ENCODE measurements at regions of chr6 and their contacts with region 1.

Region 1: GRCh38 chr6:105431226-105431625 is 28.3 kb upstream of the PREP start:
- DNase-seq: peak in 3 of 9 experiments; percentile 21 to 74 (median 68)
- ATAC-seq: no peak
- H3K4me3 ChIP-seq: no peak overlapping the region
- H3K4me3 Mint-ChIP-seq: no peak overlapping the region
- H3K27ac ChIP-seq: no peak overlapping the region
- H3K27ac Mint-ChIP-seq: no peak overlapping the region
- H3K4me1 ChIP-seq: no peaks in the 10 kb centered on the region
- H3K4me1 Mint-ChIP-seq: no peaks in the 10 kb centered on the region
- H3K27me3 ChIP-seq: no peaks in the 10 kb centered on the region
- H3K27me3 Mint-ChIP-seq: no peaks in the 10 kb centered on the region
- CTCF ChIP-seq: peak; percentile 79

Region 2: DNA sequence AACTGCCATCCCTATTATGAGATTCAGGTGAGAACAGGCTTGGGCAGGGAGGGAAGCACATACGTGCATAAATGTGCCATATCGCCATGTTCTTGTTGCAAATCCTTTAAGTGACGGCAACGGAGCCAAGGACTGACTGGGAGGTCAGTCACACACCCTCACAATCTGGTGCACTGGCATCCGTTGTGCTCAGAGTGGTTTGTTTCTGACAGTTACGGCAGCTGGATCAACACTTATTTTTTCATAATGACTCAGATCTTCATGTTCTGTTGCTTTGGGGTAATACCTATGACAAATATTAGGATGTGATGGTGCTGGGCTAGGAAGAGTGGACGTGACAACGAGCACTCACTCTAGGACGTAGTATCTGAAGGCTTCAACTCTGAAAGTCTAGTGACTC is 27.8 kb after region 1 on chr6:
- CTCF ChIA-PET with region 1: interaction called, 13 read pairs
- POLR2A ChIA-PET with region 1: no interaction called
- intact Hi-C with region 1: no loop called
- DNase-seq: peak in 5 of 9 experiments; percentile 11 to 81 (median 51)
- ATAC-seq: peak; percentile 75
- H3K4me3 ChIP-seq: peak overlapping the region in 1 of 2 experiments; percentile 40
- H3K4me3 Mint-ChIP-seq: peak overlapping the region; percentile 20
- H3K27ac ChIP-seq: peak overlapping the region; percentile 30 to 91
- H3K27ac Mint-ChIP-seq: peak overlapping the region; percentile 72
- H3K4me1 ChIP-seq: peaks cover 6% of the 10 kb centered on the region
- H3K4me1 Mint-ChIP-seq: peaks cover 46% of the 10 kb centered on the region
- H3K27me3 ChIP-seq: no peaks in the 10 kb centered on the region
- H3K27me3 Mint-ChIP-seq: no peaks in the 10 kb centered on the region
- CTCF ChIP-seq: no peak

Region 3: DNA sequence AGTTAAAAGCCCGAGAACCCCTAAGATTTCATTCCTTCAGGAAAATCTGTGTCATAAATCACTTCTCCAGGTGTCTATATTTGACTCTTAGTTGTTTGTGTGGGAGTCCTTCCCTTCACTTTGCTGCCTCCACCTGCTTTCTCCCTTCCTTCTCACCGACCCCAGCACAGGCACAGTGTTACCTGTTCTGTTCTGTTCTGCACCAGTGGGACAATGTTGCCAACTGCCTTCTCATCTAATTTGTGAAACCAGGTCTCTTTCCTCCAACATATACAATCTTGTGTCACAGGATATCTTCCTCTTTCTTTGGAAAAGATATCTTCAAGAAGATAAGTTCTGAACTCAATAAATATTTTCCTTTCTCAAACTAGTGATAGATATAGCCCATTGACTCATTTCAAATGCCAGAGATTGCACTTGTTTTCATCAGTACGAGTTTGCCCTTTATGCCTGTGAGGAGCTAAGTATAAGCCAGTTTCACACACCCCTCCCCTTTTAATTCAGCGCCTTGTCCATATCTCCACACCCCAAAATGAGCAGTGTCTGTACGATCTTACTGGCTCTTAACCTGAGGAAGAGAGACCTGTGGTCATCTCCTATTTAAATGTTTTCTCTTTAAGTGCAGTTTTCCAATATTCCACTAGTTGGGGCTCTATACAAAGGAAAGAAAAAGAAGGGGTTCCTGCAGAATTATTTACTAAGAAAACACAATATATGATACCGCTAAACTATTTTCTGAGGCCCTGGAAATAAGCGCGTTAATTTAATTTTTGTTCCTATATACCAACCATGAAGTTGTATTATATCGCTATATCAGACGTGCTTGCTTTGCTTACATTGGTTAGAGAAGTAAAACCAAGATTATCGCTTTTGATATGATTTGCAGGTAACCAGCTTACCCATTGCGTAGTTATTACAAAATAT is 53.3 kb after region 1 on chr6:
- CTCF ChIA-PET with region 1: interaction called, 22 read pairs
- POLR2A ChIA-PET with region 1: no interaction called
- intact Hi-C with region 1: loop called (anchors 2 to 10 kb)
- DNase-seq: peak in 2 of 9 experiments; percentile 56 to 64
- ATAC-seq: peak; percentile 50
- H3K4me3 ChIP-seq: no peak overlapping the region
- H3K4me3 Mint-ChIP-seq: peak overlapping the region; percentile 60
- H3K27ac ChIP-seq: peak overlapping the region in 1 of 2 experiments; percentile 18
- H3K27ac Mint-ChIP-seq: peak overlapping the region; percentile 86
- H3K4me1 ChIP-seq: no peaks in the 10 kb centered on the region
- H3K4me1 Mint-ChIP-seq: peaks cover 24% of the 10 kb centered on the region
- H3K27me3 ChIP-seq: no peaks in the 10 kb centered on the region
- H3K27me3 Mint-ChIP-seq: peaks cover 2% of the 10 kb centered on the region
- CTCF ChIP-seq: peak; percentile 85

Region 4: GRCh38 chr6:105733565-105734162 is 302.4 kb after region 1 on chr6:
- CTCF ChIA-PET with region 1: interaction called, 3 read pairs
- POLR2A ChIA-PET with region 1: no interaction called
- intact Hi-C with region 1: loop called (anchors 2 to 5 kb)
- DNase-seq: peak in 2 of 9 experiments; percentile 53 to 64
- ATAC-seq: no peak
- H3K4me3 ChIP-seq: no peak overlapping the region
- H3K4me3 Mint-ChIP-seq: no peak overlapping the region
- H3K27ac ChIP-seq: no peak overlapping the region
- H3K27ac Mint-ChIP-seq: no peak overlapping the region
- H3K4me1 ChIP-seq: no peaks in the 10 kb centered on the region
- H3K4me1 Mint-ChIP-seq: peaks cover 7% of the 10 kb centered on the region
- H3K27me3 ChIP-seq: no peaks in the 10 kb centered on the region
- H3K27me3 Mint-ChIP-seq: no peaks in the 10 kb centered on the region
- CTCF ChIP-seq: peak; percentile 73

Region 5: DNA sequence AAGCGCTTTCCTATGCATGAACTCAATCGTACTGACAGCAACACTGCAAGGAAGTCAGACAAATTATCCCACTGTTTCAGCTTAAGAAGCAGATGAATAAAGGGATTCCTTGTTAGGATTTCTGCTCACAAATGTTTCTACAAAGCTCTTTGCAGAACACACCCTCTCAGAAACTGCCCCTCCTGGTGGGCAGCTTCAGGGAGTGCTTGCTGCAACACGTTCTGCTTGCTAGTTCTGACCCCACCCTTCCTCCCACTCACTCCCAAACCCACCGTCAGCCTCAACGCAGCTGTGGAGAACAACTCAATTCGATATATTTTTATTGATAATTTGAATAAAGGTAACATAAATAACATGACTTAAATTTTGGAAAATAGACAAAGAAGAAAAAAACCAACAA is 404.1 kb after region 1 on chr6:
- CTCF ChIA-PET with region 1: interaction called, 8 read pairs
- POLR2A ChIA-PET with region 1: no interaction called
- intact Hi-C with region 1: loop called in 1 of 2 experiments (anchors 10 kb)
- DNase-seq: peak in 3 of 9 experiments; percentile 24 to 50 (median 29)
- ATAC-seq: no peak
- H3K4me3 ChIP-seq: no peak overlapping the region
- H3K4me3 Mint-ChIP-seq: no peak overlapping the region
- H3K27ac ChIP-seq: no peak overlapping the region
- H3K27ac Mint-ChIP-seq: no peak overlapping the region
- H3K4me1 ChIP-seq: no peaks in the 10 kb centered on the region
- H3K4me1 Mint-ChIP-seq: no peaks in the 10 kb centered on the region
- H3K27me3 ChIP-seq: no peaks in the 10 kb centered on the region
- H3K27me3 Mint-ChIP-seq: no peaks in the 10 kb centered on the region
- CTCF ChIP-seq: peak; percentile 20

Region 6: GRCh38 chr6:106300944-106301343 is 869.7 kb after region 1 on chr6:
- CTCF ChIA-PET with region 1: interaction called, 3 read pairs
- POLR2A ChIA-PET with region 1: interaction called, 3 read pairs
- intact Hi-C with region 1: loop called in 1 of 2 experiments (anchors 5 kb)
- DNase-seq: peak in 2 of 9 experiments; percentile 41 to 55
- ATAC-seq: no peak
- H3K4me3 ChIP-seq: no peak overlapping the region
- H3K4me3 Mint-ChIP-seq: no peak overlapping the region
- H3K27ac ChIP-seq: no peak overlapping the region
- H3K27ac Mint-ChIP-seq: no peak overlapping the region
- H3K4me1 ChIP-seq: no peaks in the 10 kb centered on the region
- H3K4me1 Mint-ChIP-seq: peaks cover 14% of the 10 kb centered on the region
- H3K27me3 ChIP-seq: no peaks in the 10 kb centered on the region
- H3K27me3 Mint-ChIP-seq: no peaks in the 10 kb centered on the region
- CTCF ChIP-seq: peak; percentile 40

Measured in CD8-positive, alpha-beta T cell (primary cell).